Activated naive CD4-positive, alpha-beta T cell treated with anti-CD3 and anti-CD28 coated beads for 36 hours (primary cell): ENCODE measurements at regions of chr1 and their contacts with region 1.

Region 1: GRCh38 chr1:224329842-224330753 is at the start of gene NVL:
- DNase-seq: peak; percentile 89
- H3K4me3 Mint-ChIP-seq: peak within 1 kb of the TSS; percentile 98
- H3K27ac Mint-ChIP-seq: peak within 1 kb of the TSS; percentile 98
- H3K4me1 Mint-ChIP-seq: peaks cover 38% of the 10 kb centered on the region
- H3K27me3 Mint-ChIP-seq: no peaks in the 10 kb centered on the region
- total RNA-seq, gene NVL: 26.7 to 29.9 TPM

Region 2: DNA sequence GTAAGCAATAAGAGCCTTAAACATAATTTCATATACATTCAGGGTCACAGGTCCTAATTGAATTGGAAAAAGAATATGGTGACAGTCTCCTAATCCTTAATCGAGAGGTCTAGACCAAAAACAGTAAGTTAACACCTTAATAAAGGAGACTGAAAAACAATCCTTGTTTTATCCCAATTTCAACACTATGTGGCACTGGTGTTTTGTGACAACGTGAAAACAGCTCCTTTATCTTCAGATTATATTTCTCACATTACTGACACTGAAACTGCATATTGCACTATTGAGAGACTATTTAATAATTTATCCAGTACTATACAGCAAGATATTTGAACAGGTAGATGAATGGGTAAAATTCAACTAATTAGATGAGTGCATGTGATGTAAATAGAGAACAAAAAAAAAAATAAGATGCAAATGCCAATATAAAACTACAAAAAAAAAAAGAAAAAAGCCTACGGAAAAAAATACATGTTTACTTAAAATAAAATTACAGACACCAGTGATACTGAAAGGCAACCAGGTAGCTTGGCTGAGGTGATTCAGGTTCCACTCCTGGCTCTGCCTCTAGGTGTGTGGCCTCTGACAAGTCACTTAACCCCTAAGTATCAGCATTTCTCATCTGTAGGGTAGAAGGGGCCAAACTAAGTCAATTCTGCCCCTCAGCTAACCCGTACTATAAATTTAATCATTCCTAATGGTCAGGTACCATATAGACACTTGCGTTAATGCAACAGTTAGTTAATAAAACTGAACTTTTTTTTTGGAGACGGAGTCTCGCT is 518.3 kb before region 1 on chr1:
- CTCF ChIA-PET with region 1: interaction called, 3 read pairs
- intact Hi-C with region 1: loop called (anchors 5 kb)
- DNase-seq: no peak
- H3K4me3 Mint-ChIP-seq: no peak overlapping the region
- H3K27ac Mint-ChIP-seq: no peak overlapping the region
- H3K4me1 Mint-ChIP-seq: peaks cover 33% of the 10 kb centered on the region
- H3K27me3 Mint-ChIP-seq: no peaks in the 10 kb centered on the region

Region 3: DNA sequence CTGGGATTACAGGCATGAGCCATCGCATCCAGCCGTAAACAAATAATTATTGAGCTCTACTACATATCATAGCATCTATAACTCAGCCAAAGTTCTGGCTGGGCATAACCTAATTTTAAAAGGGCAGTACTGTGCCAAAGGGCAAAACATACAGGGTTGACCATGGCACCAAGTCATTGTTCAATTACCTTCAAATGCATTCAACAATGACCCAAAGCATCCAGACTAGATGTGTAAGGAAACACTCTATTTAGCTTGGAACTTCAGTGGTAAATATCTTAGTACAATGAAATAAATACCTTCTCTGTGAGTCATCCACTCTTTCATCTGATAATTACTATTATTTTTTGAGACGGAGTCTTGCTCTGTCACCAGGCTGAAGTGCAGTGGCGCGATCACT is 70.2 kb before region 1 on chr1:
- CTCF ChIA-PET with region 1: no interaction called
- intact Hi-C with region 1: no loop called
- DNase-seq: no peak
- H3K4me3 Mint-ChIP-seq: no peak overlapping the region
- H3K27ac Mint-ChIP-seq: no peak overlapping the region
- H3K4me1 Mint-ChIP-seq: peaks cover 14% of the 10 kb centered on the region
- H3K27me3 Mint-ChIP-seq: no peaks in the 10 kb centered on the region

Region 4: DNA sequence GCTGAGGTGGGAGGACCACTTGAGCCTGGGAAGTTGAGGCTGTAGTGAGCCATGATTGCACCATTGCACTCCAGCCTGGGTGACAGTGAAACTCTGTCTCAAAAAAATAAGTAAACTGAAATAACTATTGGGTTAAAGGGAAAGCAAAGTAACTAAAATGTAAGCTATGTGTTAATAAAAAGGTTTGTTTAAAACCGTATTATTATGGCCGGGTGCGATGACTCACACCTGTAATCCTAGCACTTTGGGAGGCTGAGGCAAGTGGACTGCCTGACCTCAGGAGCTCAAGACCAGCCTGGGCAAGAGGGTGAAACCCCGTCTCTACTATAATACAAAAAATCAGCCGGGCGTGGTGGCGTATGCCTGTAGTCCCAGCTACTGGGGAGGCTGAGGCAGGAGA is 27.2 kb before region 1 on chr1:
- CTCF ChIA-PET with region 1: no interaction called
- intact Hi-C with region 1: no loop called
- DNase-seq: no peak
- H3K4me3 Mint-ChIP-seq: no peak overlapping the region
- H3K27ac Mint-ChIP-seq: no peak overlapping the region
- H3K4me1 Mint-ChIP-seq: no peaks in the 10 kb centered on the region
- H3K27me3 Mint-ChIP-seq: no peaks in the 10 kb centered on the region

Region 5: GRCh38 chr1:224356685-224357625 is 26.9 kb after region 1 on chr1 and contains the start of gene CNIH4:
- CTCF ChIA-PET with region 1: interaction called, 4 read pairs
- intact Hi-C with region 1: loop called (anchors 1 kb)
- DNase-seq: peak; percentile 94
- H3K4me3 Mint-ChIP-seq: peak within 1 kb of the TSS; percentile 89
- H3K27ac Mint-ChIP-seq: peak within 1 kb of the TSS; percentile 86
- H3K4me1 Mint-ChIP-seq: peaks cover 31% of the 10 kb centered on the region
- H3K27me3 Mint-ChIP-seq: no peaks in the 10 kb centered on the region
- total RNA-seq, gene CNIH4: 34.7 to 35.1 TPM

Region 6: DNA sequence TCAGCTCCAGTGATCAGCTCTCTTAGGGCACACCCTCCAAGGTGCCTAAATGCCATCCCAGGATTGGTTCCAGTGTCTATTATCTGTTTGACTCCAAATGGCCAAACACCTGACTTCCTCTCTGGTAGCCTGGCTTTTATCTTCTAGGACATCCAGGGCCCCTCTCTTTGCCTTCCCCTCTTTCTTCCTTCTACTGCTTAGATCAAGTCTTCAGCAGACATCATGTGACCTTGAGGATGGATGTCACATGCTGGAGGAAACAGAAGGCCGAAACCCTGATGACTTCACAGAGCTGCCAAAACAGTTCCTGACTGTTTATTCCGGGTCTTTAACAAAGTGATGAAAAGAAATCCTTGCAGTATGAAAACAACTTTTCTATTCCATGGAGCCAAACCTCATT is 128.9 kb after region 1 on chr1:
- CTCF ChIA-PET with region 1: interaction called, 10 read pairs
- intact Hi-C with region 1: loop called (anchors 1 kb)
- DNase-seq: no peak
- H3K4me3 Mint-ChIP-seq: no peak overlapping the region
- H3K27ac Mint-ChIP-seq: peak overlapping the region; percentile 41
- H3K4me1 Mint-ChIP-seq: peaks cover 13% of the 10 kb centered on the region
- H3K27me3 Mint-ChIP-seq: no peaks in the 10 kb centered on the region